Naive thymus-derived CD4-positive, alpha-beta T cell (primary cell): ENCODE measurements at regions of chr5 and their contacts with region 1.

Region 1: DNA sequence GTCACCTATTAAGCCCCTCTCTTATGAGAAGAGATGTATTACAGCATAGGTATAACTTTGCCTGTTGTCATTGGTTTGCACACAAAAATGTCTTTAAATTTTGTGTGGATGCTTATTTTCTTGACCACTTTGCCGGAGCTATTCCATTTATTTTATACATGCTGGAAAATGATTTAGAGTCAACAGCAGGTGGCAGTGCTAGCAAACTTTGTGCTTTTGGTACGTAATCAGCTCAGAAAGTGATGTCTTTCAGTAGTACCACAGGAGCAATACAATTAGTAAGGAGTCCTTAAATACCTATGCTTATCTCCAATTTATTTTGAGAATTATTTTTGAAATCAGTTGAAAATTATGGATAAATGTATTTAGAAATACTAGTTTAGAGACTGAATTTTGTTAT is 19.8 kb upstream of the NUDT12 start:
- DNase-seq: no peak
- ATAC-seq: no peak
- H3K4me3 ChIP-seq: no peak overlapping the region
- H3K4me3 Mint-ChIP-seq: no peak overlapping the region
- H3K27ac ChIP-seq: no peak overlapping the region
- H3K27ac Mint-ChIP-seq: no peak overlapping the region
- H3K4me1 ChIP-seq: no peaks in the 10 kb centered on the region
- H3K4me1 Mint-ChIP-seq: no peaks in the 10 kb centered on the region
- H3K27me3 ChIP-seq: no peaks in the 10 kb centered on the region
- H3K27me3 Mint-ChIP-seq: peaks cover 0 to 8% (median 3%) of the 10 kb centered on the region in 5 donors

Region 2: DNA sequence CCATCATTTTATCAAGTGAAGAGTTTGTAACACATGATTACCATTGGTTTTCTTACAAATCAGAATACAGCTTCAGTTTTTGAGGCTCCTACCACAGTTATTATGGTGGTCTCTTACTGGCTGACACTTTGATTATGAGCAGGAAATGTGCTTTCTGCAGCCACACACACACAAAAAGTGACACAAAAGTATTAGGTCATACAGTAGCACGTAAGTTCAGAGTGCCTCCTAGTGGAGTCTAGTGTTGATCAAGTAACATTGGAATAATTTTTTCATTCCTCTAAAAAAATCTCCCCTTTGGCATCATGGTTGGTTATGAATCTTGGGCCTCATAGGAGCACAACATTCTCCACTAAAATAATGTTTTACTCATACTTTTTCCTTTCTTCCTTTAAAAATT is 789.7 kb before region 1 on chr5:
- CTCF ChIA-PET with region 1: no interaction called
- POLR2A ChIA-PET with region 1: no interaction called
- intact Hi-C with region 1: no loop called
- DNase-seq: peak in 1 of 9 donors; percentile 11
- ATAC-seq: peak; percentile 63
- H3K4me3 ChIP-seq: no peak overlapping the region
- H3K4me3 Mint-ChIP-seq: no peak overlapping the region
- H3K27ac ChIP-seq: no peak overlapping the region
- H3K27ac Mint-ChIP-seq: no peak overlapping the region
- H3K4me1 ChIP-seq: no peaks in the 10 kb centered on the region
- H3K4me1 Mint-ChIP-seq: peaks cover 0 to 24% (median 5%) of the 10 kb centered on the region in 7 donors
- H3K27me3 ChIP-seq: no peaks in the 10 kb centered on the region
- H3K27me3 Mint-ChIP-seq: no peaks in the 10 kb centered on the region

Region 3: DNA sequence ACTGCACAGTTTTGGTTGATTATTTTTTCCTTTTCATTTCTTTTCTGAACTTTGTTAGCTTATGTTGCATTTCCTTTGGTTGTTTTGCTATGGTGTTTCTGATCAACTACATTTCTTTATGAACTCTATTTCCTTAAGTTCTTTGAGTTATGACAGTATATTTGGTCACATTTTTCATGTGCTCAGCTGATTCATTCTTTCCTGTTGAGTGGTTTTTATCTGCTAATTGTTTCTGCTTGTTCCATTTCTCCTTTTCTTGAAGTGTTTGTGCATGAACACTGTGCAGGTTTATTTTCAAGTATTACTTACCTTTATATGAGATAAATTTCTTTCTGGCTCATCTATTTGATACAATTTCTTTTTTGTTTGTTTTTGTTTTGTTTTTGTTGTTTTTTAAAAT is 374.7 kb before region 1 on chr5:
- CTCF ChIA-PET with region 1: no interaction called
- POLR2A ChIA-PET with region 1: no interaction called
- intact Hi-C with region 1: no loop called
- DNase-seq: no peak
- ATAC-seq: no peak
- H3K4me3 ChIP-seq: no peak overlapping the region
- H3K4me3 Mint-ChIP-seq: peak overlapping the region in 1 of 10 donors; percentile 6
- H3K27ac ChIP-seq: no peak overlapping the region
- H3K27ac Mint-ChIP-seq: peak overlapping the region in 2 of 9 donors; percentile 33 to 70
- H3K4me1 ChIP-seq: peaks cover 0 to 7% of the 10 kb centered on the region in 2 donors
- H3K4me1 Mint-ChIP-seq: peaks cover 10 to 30% (median 14%) of the 10 kb centered on the region in 7 donors
- H3K27me3 ChIP-seq: no peaks in the 10 kb centered on the region
- H3K27me3 Mint-ChIP-seq: no peaks in the 10 kb centered on the region

Region 4: GRCh38 chr5:104178829-104179456 is 596.6 kb after region 1 on chr5:
- CTCF ChIA-PET with region 1: no interaction called
- POLR2A ChIA-PET with region 1: no interaction called
- intact Hi-C with region 1: loop called in 1 of 2 experiments (anchors 2 kb)
- DNase-seq: no peak
- ATAC-seq: no peak
- H3K4me3 ChIP-seq: no peak overlapping the region
- H3K4me3 Mint-ChIP-seq: no peak overlapping the region
- H3K27ac ChIP-seq: no peak overlapping the region
- H3K27ac Mint-ChIP-seq: no peak overlapping the region
- H3K4me1 ChIP-seq: no peaks in the 10 kb centered on the region
- H3K4me1 Mint-ChIP-seq: no peaks in the 10 kb centered on the region
- H3K27me3 ChIP-seq: no peaks in the 10 kb centered on the region
- H3K27me3 Mint-ChIP-seq: no peaks in the 10 kb centered on the region

Region 5: GRCh38 chr5:104598285-104598684 is 1015.9 kb after region 1 on chr5:
- CTCF ChIA-PET with region 1: no interaction called
- POLR2A ChIA-PET with region 1: no interaction called
- intact Hi-C with region 1: no loop called
- DNase-seq: no peak
- ATAC-seq: no peak
- H3K4me3 ChIP-seq: no peak overlapping the region
- H3K4me3 Mint-ChIP-seq: no peak overlapping the region
- H3K27ac ChIP-seq: no peak overlapping the region
- H3K27ac Mint-ChIP-seq: no peak overlapping the region
- H3K4me1 ChIP-seq: no peaks in the 10 kb centered on the region
- H3K4me1 Mint-ChIP-seq: no peaks in the 10 kb centered on the region
- H3K27me3 ChIP-seq: no peaks in the 10 kb centered on the region
- H3K27me3 Mint-ChIP-seq: no peaks in the 10 kb centered on the region